ENCODE measurements at regions of chr2 and their contacts with region 1.

Region 1: DNA sequence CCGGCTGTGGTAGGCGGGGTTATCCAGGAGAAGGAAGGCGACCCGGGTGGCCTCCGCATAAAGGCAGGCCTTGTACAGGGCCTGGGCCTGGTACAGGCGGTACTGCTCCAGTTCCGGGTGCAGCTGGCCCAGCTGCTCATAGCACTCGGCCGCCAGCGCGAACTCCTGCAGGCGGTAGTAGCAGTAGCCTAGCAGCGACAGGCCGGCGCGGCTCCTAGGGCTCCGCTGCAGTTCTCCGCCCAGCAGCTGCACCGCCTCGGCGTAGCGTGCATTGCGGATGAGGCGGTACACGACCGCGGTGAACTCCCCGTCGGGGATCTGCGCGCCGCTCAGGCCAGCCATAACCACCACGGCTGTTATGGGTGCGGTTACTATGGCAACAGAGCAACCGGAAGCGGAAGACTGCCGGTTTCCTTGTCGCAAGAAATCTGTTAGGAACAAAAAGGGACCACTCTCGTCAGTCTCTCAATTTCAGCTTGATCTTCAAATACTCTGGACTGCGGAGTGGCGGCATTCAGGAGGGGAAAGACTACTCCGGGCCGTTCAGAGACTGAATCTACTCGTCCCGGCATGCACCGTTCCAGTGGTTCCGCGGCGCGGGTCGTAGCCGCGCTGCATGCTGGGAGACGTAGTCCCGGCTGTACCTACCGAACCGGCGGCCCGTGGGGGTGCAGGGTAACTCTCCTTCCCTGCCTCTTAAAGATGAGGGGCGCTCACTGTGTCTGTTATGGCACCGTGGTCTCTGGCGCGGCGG is 160.0 kb downstream of the AGPS start:
- DNase-seq: peak; percentile 98
- H3K4me3 Mint-ChIP-seq: peak overlapping the region; percentile 95
- H3K27ac Mint-ChIP-seq: peak overlapping the region; percentile 100
- H3K4me1 Mint-ChIP-seq: peaks cover 11% of the 10 kb centered on the region
- H3K27me3 Mint-ChIP-seq: peaks cover 7% of the 10 kb centered on the region

Region 2: DNA sequence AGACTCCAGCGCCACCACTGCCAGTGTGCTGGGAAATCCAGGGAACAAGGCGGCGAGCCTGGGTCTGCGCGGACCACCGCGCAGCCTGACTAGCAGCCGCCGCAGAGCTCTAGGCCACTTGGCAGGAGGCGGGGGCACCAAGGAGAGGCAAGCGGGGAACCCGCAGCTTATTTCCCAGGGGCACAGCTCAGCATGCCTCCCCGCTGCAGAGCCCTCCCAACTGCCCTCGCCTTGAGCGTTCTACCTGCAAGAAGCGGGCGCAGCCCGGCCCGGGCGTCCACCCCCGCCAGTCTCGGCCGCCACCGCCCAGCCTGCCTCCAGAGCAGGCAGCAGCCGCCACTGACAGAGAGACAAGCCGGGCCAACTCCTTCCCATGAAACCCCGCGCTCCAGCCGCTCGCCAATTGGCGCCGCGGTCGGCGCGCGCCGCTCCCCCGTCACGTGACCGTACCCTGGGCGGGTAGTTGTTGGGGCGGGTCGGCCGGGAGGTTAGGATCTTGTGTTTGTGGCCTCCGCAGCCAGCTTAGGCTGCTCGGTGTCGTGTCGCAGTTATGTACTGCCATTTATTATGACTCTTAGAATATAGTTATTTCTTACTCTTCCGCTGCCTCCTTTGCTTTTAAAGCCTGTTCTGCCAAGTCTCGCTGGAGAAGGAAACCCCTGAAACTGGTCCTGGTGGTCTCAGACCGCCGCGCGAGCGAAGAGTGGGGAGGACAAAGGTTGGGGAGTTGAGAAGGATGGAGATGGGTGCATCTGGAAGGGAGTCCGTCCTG is 1550.5 kb before region 1 on chr2 and contains the start of gene LNPK:
- intact Hi-C with region 1: loop called (anchors 5 kb)
- DNase-seq: peak; percentile 98
- H3K4me3 Mint-ChIP-seq: peak within 1 kb of the TSS; percentile 100
- H3K27ac Mint-ChIP-seq: peak within 1 kb of the TSS; percentile 98
- H3K4me1 Mint-ChIP-seq: peaks cover 20% of the 10 kb centered on the region
- H3K27me3 Mint-ChIP-seq: peaks cover 8% of the 10 kb centered on the region
- total RNA-seq, gene LNPK: 46.3 and 47.8 TPM in 2 replicates

Region 3: GRCh38 chr2:177392373-177393202 is 160.0 kb before region 1 on chr2 and contains the start of gene AGPS:
- intact Hi-C with region 1: loop called (anchors 2 kb)
- DNase-seq: peak; percentile 95
- H3K4me3 Mint-ChIP-seq: peak within 1 kb of the TSS; percentile 91
- H3K27ac Mint-ChIP-seq: peak within 1 kb of the TSS; percentile 95
- H3K4me1 Mint-ChIP-seq: peaks cover 54% of the 10 kb centered on the region
- H3K27me3 Mint-ChIP-seq: no peaks in the 10 kb centered on the region
- total RNA-seq, gene AGPS: 74.0 and 76.7 TPM in 2 replicates

Region 4: GRCh38 chr2:177405029-177405692 is 147.4 kb before region 1 on chr2:
- intact Hi-C with region 1: no loop called
- DNase-seq: peak; percentile 51
- H3K4me3 Mint-ChIP-seq: no peak overlapping the region
- H3K27ac Mint-ChIP-seq: no peak overlapping the region
- H3K4me1 Mint-ChIP-seq: peaks cover 19% of the 10 kb centered on the region
- H3K27me3 Mint-ChIP-seq: no peaks in the 10 kb centered on the region

Region 5: GRCh38 chr2:177429688-177430325 is 122.8 kb before region 1 on chr2:
- intact Hi-C with region 1: no loop called
- DNase-seq: no peak
- H3K4me3 Mint-ChIP-seq: no peak overlapping the region
- H3K27ac Mint-ChIP-seq: no peak overlapping the region
- H3K4me1 Mint-ChIP-seq: peaks cover 7% of the 10 kb centered on the region
- H3K27me3 Mint-ChIP-seq: no peaks in the 10 kb centered on the region

Region 6: DNA sequence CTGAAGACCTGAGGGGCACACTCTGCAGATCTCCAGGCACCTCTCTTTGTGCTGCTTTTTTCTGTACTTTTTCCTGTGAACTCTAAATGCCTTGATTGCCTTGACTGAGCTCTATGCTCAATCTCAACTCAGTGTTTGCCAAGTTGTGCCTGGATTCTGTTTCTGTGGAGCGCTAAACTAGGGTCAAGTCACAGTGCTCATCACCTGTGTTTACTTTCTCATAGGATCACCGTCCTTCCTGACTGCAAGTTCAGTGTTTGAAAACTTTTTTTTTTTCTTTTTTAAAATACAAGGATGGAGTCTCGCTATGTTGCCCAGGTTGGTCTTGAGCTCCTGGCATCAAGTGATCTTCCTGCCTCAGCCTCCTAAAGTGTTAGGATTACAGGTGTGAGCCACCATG is 97.4 kb before region 1 on chr2:
- intact Hi-C with region 1: no loop called
- DNase-seq: no peak
- H3K4me3 Mint-ChIP-seq: no peak overlapping the region
- H3K27ac Mint-ChIP-seq: no peak overlapping the region
- H3K4me1 Mint-ChIP-seq: no peaks in the 10 kb centered on the region
- H3K27me3 Mint-ChIP-seq: no peaks in the 10 kb centered on the region

Region 7: GRCh38 chr2:177501186-177501585 is 51.4 kb before region 1 on chr2:
- intact Hi-C with region 1: loop called (anchors 5 kb)
- DNase-seq: no peak
- H3K4me3 Mint-ChIP-seq: no peak overlapping the region
- H3K27ac Mint-ChIP-seq: no peak overlapping the region
- H3K4me1 Mint-ChIP-seq: peaks cover 10% of the 10 kb centered on the region
- H3K27me3 Mint-ChIP-seq: no peaks in the 10 kb centered on the region

Region 8: GRCh38 chr2:177568390-177568789 is 15.8 kb after region 1 on chr2:
- intact Hi-C with region 1: no loop called
- DNase-seq: no peak
- H3K4me3 Mint-ChIP-seq: no peak overlapping the region
- H3K27ac Mint-ChIP-seq: no peak overlapping the region
- H3K4me1 Mint-ChIP-seq: peaks cover 6% of the 10 kb centered on the region
- H3K27me3 Mint-ChIP-seq: peaks cover 2% of the 10 kb centered on the region

Region 9: DNA sequence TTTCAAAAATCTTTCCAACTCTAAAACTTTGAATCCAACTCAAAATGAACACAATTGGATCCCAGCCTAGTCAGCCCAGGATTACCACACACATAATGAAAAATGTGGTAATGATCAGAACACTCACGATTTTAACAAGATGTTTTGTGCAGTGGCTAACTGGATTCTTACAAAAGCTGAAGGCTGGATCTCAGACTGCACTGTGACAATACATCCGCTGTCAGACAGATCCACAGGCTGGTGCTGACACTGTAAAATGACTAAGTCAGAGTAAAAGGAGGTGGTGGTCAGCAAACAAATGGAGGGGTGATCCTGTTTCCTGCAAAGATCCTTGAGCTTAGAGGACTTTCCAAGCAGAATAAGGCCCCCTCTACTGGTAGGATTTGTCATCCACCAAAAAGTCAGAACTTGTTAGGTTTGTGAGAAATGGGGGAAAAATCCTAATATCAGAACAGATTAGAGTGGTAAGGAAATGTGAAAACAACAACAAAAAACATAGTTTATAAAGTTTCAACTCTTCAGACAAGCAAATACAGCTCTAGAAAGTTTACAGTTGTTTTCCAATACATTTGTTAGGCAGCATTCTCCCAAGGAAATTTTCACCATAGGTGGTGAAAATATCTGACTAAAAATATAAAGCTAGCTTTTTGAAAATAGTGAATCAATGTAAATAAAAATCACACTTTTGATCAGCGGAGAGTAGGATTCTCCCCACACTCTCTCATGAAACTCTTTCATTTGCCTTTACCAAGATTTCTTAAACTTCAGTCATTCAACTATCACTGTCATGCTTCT is 51.9 kb after region 1 on chr2:
- intact Hi-C with region 1: loop called (anchors 5 kb)
- DNase-seq: no peak
- H3K4me3 Mint-ChIP-seq: no peak overlapping the region
- H3K27ac Mint-ChIP-seq: no peak overlapping the region
- H3K4me1 Mint-ChIP-seq: no peaks in the 10 kb centered on the region
- H3K27me3 Mint-ChIP-seq: peaks cover 4% of the 10 kb centered on the region

Region 10: GRCh38 chr2:177618255-177619253 is 66.0 kb after region 1 on chr2:
- intact Hi-C with region 1: loop called (anchors 1 kb)
- DNase-seq: peak; percentile 98
- H3K4me3 Mint-ChIP-seq: peak overlapping the region; percentile 92
- H3K27ac Mint-ChIP-seq: peak overlapping the region; percentile 97
- H3K4me1 Mint-ChIP-seq: peaks cover 8% of the 10 kb centered on the region
- H3K27me3 Mint-ChIP-seq: peaks cover 24% of the 10 kb centered on the region